Activated CD4-positive, alpha-beta T cell treated with anti-CD3 and anti-CD28 coated beads for 36 hours (primary cell): ENCODE measurements at regions of chr6 and their contacts with region 1.

Region 1: DNA sequence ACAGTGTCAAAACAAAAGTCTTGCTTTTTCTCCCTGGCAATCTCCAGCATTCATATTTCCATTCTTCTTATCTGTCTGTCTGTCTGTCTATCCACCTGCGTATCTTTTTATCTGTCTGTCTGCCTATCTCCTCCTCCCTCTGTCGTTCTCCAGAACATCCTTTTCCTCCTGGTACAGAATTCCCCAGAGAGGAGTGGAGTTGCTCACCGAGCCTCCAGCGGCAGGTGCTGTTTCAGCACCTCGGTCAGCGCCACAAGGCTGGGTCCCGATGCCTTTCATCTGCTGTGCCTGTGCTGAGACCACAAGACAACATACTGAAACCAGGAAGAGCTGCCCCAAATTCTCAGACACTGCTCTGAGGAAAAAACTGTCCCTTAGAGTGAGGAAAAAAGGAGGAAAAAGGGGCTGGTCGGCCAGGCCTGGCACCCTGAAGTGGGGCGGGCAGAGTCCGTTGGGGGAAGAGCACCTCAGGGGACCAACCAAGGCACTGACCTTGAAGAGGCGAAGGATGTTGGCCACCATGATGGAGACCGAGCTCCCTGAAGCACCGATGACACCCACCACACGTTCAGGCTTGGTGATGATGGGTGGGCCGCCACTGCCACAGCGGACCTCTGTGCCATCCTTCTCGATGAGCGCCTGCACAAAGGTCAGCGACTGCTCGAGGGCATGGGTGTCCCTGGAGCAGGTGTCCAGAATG is 13.3 kb downstream of the GRM4 start:
- DNase-seq: peak; percentile 63
- ATAC-seq: no peak
- H3K4me3 Mint-ChIP-seq: no peak overlapping the region
- H3K27ac Mint-ChIP-seq: no peak overlapping the region
- H3K4me1 Mint-ChIP-seq: peaks cover 2% of the 10 kb centered on the region
- H3K27me3 Mint-ChIP-seq: peaks cover 40% of the 10 kb centered on the region

Region 2: DNA sequence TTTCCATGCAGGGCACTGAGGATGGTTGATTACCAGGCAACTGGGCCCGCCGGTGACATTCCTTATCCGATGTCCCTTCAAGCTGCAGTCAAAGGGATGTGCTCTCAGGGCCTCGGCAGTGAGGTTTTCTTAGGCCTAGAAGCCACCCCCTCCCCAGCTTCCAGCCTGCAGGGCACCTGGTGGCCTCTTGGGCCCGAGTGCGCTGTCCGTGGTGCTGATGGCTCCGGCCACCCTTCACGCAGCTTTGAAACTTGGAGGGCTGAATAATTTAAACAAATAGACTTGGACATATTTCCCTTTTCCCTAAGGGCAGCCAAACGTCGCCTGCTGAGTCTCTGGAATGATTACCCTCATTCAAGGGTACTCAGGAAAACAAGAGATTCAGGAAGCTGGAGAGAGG is 320.0 kb before region 1 on chr6:
- CTCF ChIA-PET with region 1: no interaction called
- POLR2A ChIA-PET with region 1: no interaction called
- intact Hi-C with region 1: loop called in 1 of 2 experiments (anchors 5 kb)
- DNase-seq: peak; percentile 67
- ATAC-seq: no peak
- H3K4me3 Mint-ChIP-seq: no peak overlapping the region
- H3K27ac Mint-ChIP-seq: no peak overlapping the region
- H3K4me1 Mint-ChIP-seq: peaks cover 15% of the 10 kb centered on the region
- H3K27me3 Mint-ChIP-seq: peaks cover 49% of the 10 kb centered on the region

Region 3: DNA sequence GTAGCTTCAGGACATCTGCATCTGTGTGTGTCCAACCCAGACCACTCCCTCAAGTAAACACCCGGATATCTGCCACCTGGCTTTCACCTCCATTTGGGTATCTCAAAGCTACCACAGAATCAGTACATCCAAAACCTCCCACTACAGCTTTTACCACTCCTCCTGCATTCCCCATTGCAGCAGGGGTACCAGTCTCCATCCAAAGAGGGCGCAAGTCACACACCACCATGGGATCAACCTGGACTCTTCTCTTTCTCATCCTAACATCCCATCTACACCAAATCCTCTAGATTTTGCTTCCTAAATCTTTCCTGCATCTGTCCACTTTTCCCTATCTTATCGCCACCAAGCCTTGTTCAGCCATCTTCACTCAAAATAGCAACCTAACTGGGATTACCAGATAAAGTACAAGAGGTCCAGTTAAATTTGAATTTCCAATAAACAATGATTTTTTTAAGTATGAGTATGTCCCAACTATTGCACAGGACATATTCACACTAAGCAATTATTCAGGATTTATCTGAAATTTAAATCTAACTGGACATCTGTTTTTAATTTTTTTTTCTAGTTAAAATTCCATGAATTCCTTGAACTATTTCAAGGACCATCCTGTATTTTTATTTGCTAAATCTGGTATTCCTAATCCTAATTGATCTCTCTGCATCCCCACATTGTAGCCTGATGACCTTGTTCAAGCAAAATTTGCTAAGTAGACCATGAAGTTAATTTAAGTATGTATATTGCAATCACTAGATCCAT is 164.5 kb before region 1 on chr6:
- CTCF ChIA-PET with region 1: no interaction called
- POLR2A ChIA-PET with region 1: no interaction called
- intact Hi-C with region 1: no loop called
- DNase-seq: no peak
- ATAC-seq: no peak
- H3K4me3 Mint-ChIP-seq: no peak overlapping the region
- H3K27ac Mint-ChIP-seq: no peak overlapping the region
- H3K4me1 Mint-ChIP-seq: no peaks in the 10 kb centered on the region
- H3K27me3 Mint-ChIP-seq: peaks cover 13% of the 10 kb centered on the region

Region 4: GRCh38 chr6:34115403-34115795 is 17.2 kb before region 1 on chr6:
- CTCF ChIA-PET with region 1: no interaction called
- POLR2A ChIA-PET with region 1: no interaction called
- intact Hi-C with region 1: loop called (anchors 1 kb)
- DNase-seq: peak; percentile 51
- ATAC-seq: no peak
- H3K4me3 Mint-ChIP-seq: no peak overlapping the region
- H3K27ac Mint-ChIP-seq: no peak overlapping the region
- H3K4me1 Mint-ChIP-seq: no peaks in the 10 kb centered on the region
- H3K27me3 Mint-ChIP-seq: peaks cover 12% of the 10 kb centered on the region